Heart right ventricle (tissue), 16 donors: ENCODE measurements at regions of chr6 and their contacts with region 1.

Region 1: DNA sequence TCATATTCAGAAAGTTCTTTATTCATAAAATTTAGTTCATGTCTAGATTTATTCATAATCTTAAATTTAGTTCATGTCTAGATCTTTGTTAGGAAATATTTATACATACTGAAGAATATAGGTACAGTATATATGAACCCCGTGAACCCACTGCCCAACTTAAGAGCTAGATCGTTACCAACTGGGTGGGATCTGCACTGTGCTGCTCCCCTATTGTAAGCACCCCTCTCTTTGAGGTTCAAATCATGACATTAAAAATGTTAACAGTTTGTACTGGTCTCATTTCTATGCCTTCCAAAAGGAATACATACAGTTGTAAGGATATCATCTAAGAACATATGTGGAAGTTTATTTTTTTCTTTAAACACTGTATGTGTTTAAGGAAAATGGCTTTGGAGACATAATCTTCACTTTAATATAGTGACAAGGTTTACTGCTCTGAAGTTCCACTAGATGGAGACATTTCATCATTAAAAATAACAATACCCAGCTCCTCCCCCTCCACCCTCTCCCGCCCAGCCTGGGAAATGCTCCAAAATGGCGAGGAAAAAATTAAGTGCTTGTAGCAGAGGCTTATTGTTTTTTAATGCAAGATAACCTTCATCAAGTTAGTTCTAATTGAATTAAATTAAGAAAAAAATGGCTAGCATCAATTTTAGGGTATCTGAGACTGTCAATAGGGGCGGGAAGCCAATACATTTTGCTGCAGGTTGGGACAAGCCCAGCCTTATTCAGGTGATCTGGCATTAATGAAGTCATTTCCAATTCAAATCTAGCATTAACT is 104.1 kb upstream of the TRAF3IP2 start:
- DNase-seq: peak; percentile 41 to 86
- ATAC-seq: peak; percentile 74 to 89 (median 78)
- H3K4me3 ChIP-seq: peak overlapping the region in 4 of 10 donors; percentile 7 to 25 (median 12)
- H3K27ac ChIP-seq: peak overlapping the region in 9 of 10 donors; percentile 10 to 72 (median 49)
- H3K4me1 ChIP-seq: peaks cover 12 to 42% (median 33%) of the 10 kb centered on the region in 9 donors
- H3K27me3 ChIP-seq: no peaks in the 10 kb centered on the region
- CTCF ChIP-seq: peak; percentile 44 to 83 (median 75)

Region 2: GRCh38 chr6:111503207-111503606 is 206.6 kb before region 1 on chr6:
- intact Hi-C with region 1: no loop called
- DNase-seq: no peak
- ATAC-seq: no peak
- H3K4me3 ChIP-seq: no peak overlapping the region
- H3K27ac ChIP-seq: no peak overlapping the region
- H3K4me1 ChIP-seq: peaks cover 0 to 12% (median 0%) of the 10 kb centered on the region in 9 donors
- H3K27me3 ChIP-seq: no peaks in the 10 kb centered on the region
- CTCF ChIP-seq: no peak

Region 3: DNA sequence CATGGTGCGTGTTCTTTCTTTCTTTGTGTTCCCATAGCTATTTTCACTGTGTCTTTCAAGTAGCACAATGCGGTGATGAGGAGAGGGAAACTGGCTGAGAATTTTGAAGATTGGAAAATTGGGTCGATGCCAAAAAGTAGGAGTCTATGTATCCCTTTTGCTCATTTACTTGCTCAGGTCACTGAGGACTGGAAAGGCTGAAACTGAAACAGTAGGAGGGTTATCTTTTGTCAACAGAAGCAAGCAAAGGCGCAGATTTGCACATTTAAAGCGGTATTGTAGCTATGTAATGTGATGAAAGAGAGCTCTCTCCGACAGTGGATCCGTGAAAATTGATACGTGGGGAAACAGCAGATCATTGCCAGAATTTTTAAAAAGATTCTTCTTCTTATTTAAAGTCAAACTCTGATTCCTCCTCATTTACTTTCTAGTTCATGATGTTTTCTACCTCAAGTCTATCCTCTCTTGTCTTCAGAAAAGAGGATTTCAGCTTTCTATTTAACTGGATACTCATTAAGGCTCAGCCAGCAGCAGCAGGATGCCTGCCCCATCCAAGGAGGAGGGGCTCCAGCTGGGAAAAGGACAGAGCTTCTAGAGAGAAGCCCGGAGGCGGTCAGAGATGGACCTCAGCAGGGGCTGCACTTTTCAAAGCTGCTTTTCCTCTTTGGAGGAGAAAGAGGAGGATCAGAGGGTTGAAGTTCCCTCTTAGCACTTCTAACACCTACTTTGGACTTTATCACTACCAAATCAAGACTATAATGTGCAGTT is 179.3 kb after region 1 on chr6:
- intact Hi-C with region 1: loop called in 1 of 10 experiments (anchors 10 kb)
- DNase-seq: peak; percentile 28 to 53
- ATAC-seq: peak in 7 of 8 donors; percentile 71 to 92 (median 83)
- H3K4me3 ChIP-seq: peak overlapping the region in 7 of 10 donors; percentile 13 to 46 (median 33)
- H3K27ac ChIP-seq: peak overlapping the region in 7 of 10 donors; percentile 2 to 63 (median 47)
- H3K4me1 ChIP-seq: peaks cover 0 to 16% (median 0%) of the 10 kb centered on the region in 9 donors
- H3K27me3 ChIP-seq: no peaks in the 10 kb centered on the region
- CTCF ChIP-seq: no peak

Region 4: GRCh38 chr6:112043032-112044007 is 333.5 kb after region 1 on chr6:
- intact Hi-C with region 1: loop called (anchors 1 to 5 kb)
- DNase-seq: peak; percentile 87
- ATAC-seq: peak; percentile 88 to 99 (median 94)
- H3K4me3 ChIP-seq: peak overlapping the region; percentile 33 to 75 (median 58)
- H3K27ac ChIP-seq: peak overlapping the region; percentile 57 to 88 (median 78)
- H3K4me1 ChIP-seq: peaks cover 0 to 37% (median 12%) of the 10 kb centered on the region in 9 donors
- H3K27me3 ChIP-seq: no peaks in the 10 kb centered on the region
- CTCF ChIP-seq: peak; percentile 88 to 99 (median 95)